H1 (cell line): ENCODE measurements at regions of chr1 and their contacts with region 1.

Region 1: DNA sequence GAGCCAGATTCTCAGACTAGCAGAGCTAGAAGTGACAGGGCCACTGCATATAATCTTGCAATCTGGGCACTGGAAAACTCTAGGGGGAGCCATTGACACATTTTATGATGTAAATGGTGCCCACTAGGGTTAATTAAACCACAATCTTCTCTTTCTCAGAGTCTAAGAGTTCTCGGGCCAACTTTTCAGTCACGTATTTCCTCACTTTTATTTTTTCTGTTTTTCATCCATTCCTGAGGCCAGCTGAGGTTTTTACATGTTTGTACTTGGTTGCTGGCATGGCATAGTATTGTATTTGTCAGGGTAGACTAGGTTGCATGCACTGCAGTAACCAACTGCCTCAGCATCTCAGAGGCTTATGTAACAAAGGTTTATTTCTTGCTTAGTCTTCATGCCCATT is 138.2 kb downstream of the ZNF326 start:
- DNase-seq: peak in 1 of 2 experiments; percentile 51
- H3K4me3 ChIP-seq: no peak overlapping the region
- H3K27ac ChIP-seq: no peak overlapping the region
- H3K4me1 ChIP-seq: no peaks in the 10 kb centered on the region
- H3K27me3 ChIP-seq: no peaks in the 10 kb centered on the region
- CTCF ChIP-seq: peak in 2 of 3 experiments; percentile 76 to 78; a peak in 3 of 4 replicates
- EP300 ChIP-seq: no peak
- POLR2A ChIP-seq: no peak
- RAD21 ChIP-seq: peak; percentile 79 to 88

Region 2: GRCh38 chr1:90012305-90012704 is 120.8 kb before region 1 on chr1:
- CTCF ChIA-PET with region 1: no interaction called
- POLR2A ChIA-PET with region 1: no interaction called
- DNase-seq: no peak
- H3K4me3 ChIP-seq: no peak overlapping the region
- H3K27ac ChIP-seq: no peak overlapping the region
- H3K4me1 ChIP-seq: no peaks in the 10 kb centered on the region
- H3K27me3 ChIP-seq: no peaks in the 10 kb centered on the region
- CTCF ChIP-seq: no peak
- EP300 ChIP-seq: no peak
- POLR2A ChIP-seq: no peak
- RAD21 ChIP-seq: no peak

Region 3: DNA sequence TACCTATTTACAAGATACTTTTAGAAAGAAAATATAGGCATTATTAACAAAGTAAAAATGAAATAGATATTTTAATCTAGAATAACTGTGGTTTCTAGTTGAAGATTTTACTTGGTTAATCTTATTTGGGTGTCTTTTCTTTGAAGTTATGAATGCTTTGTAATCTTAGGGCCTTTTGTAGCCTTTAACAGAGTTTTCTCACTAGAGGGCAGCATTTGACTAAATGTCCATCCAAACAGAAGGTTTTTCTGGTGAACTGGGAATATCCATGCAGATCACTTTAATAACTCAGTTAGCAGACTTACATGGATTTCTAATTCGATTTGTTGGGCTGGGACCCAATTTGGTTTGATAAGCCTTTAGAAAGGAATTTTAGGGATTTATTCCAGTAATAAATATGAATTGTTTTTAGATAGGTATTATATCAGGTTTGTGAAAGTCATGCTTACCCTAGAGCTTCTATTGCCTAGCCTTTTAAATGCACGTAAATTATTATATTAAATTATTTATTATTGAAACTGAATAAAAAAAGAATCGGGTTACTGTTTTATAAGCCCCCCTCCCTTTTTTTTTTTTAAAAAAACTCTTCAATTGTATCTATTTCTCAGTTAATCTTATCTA is 18.5 kb before region 1 on chr1:
- CTCF ChIA-PET with region 1: interaction called, 12 read pairs
- POLR2A ChIA-PET with region 1: no interaction called
- DNase-seq: no peak
- H3K4me3 ChIP-seq: no peak overlapping the region
- H3K27ac ChIP-seq: no peak overlapping the region
- H3K4me1 ChIP-seq: no peaks in the 10 kb centered on the region
- H3K27me3 ChIP-seq: no peaks in the 10 kb centered on the region
- CTCF ChIP-seq: peak in 2 of 3 experiments; percentile 48 to 59; a peak in 2 of 4 replicates
- EP300 ChIP-seq: no peak
- POLR2A ChIP-seq: no peak
- RAD21 ChIP-seq: peak; percentile 87 to 89

Region 4: GRCh38 chr1:90122654-90123340 is 10.3 kb before region 1 on chr1:
- CTCF ChIA-PET with region 1: interaction called, 20 read pairs
- POLR2A ChIA-PET with region 1: no interaction called
- DNase-seq: no peak
- H3K4me3 ChIP-seq: no peak overlapping the region
- H3K27ac ChIP-seq: no peak overlapping the region
- H3K4me1 ChIP-seq: no peaks in the 10 kb centered on the region
- H3K27me3 ChIP-seq: no peaks in the 10 kb centered on the region
- CTCF ChIP-seq: no peak
- EP300 ChIP-seq: no peak
- POLR2A ChIP-seq: no peak
- RAD21 ChIP-seq: no peak

Region 5: GRCh38 chr1:90149101-90149500 is 16.0 kb after region 1 on chr1:
- CTCF ChIA-PET with region 1: interaction called, 36 read pairs
- POLR2A ChIA-PET with region 1: no interaction called
- DNase-seq: peak in 1 of 2 experiments; percentile 61
- H3K4me3 ChIP-seq: no peak overlapping the region
- H3K27ac ChIP-seq: no peak overlapping the region
- H3K4me1 ChIP-seq: no peaks in the 10 kb centered on the region
- H3K27me3 ChIP-seq: no peaks in the 10 kb centered on the region
- CTCF ChIP-seq: peak; percentile 21 to 75 (median 52)
- EP300 ChIP-seq: no peak
- POLR2A ChIP-seq: no peak
- RAD21 ChIP-seq: peak; percentile 53 to 56